Caco-2 (cell line): ENCODE measurements at regions of chr20 and their contacts with region 1.

Region 1: DNA sequence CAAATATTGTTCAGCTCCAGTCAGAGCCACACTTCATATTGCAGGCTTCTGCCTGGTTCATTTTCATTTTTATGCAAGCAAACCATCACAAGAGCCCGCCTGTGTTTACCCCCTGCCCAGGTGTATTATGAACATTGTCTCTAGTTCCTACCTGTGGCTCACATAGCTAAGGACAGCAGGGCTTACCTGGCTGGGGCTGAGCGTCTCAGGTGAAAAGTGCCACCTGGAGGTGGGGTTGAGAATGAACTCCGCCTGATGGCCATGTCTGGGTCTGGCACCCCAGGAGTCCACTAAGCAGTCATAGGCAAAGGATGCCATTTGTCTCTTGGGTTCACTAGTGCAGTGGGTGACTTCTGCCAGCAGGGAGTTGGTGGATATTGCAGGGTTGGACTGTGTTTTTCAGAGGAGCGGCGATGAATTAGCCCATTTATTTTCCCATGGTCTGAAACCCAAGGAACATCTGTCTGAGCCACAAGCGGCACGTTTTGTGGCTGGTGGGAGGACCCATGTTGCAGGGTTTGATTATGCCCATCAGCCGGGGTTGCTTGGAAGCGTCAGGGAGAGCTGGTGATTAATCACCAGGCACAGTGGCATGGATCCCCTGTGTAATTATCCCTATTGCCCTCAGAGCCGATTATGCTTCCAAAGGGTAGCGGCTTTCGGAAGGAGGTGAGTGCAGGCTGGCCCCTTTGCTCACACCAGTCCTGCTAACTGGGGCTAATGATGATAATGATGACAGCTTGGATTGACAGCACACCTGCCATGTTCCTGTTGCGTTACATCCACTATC is 92.1 kb downstream of the CDH26 start:
- DNase-seq: peak; percentile 86 to 90
- H3K4me3 ChIP-seq: no peak overlapping the region
- H3K4me3 Mint-ChIP-seq: no peak overlapping the region
- H3K27ac Mint-ChIP-seq: no peak overlapping the region
- H3K4me1 ChIP-seq: peaks cover 8% of the 10 kb centered on the region
- H3K4me1 Mint-ChIP-seq: peaks cover 24% of the 10 kb centered on the region
- H3K27me3 ChIP-seq: no peaks in the 10 kb centered on the region
- H3K27me3 Mint-ChIP-seq: peaks cover 3% of the 10 kb centered on the region
- CTCF ChIP-seq: peak; percentile 94 to 98

Region 2: GRCh38 chr20:59925939-59926338 is 124.4 kb before region 1 on chr20:
- CTCF ChIA-PET with region 1: no interaction called
- POLR2A ChIA-PET with region 1: no interaction called
- intact Hi-C with region 1: no loop called
- DNase-seq: no peak
- H3K4me3 ChIP-seq: no peak overlapping the region
- H3K4me3 Mint-ChIP-seq: no peak overlapping the region
- H3K27ac Mint-ChIP-seq: no peak overlapping the region
- H3K4me1 ChIP-seq: peaks cover 20% of the 10 kb centered on the region
- H3K4me1 Mint-ChIP-seq: peaks cover 14% of the 10 kb centered on the region
- H3K27me3 ChIP-seq: no peaks in the 10 kb centered on the region
- H3K27me3 Mint-ChIP-seq: no peaks in the 10 kb centered on the region
- CTCF ChIP-seq: no peak

Region 3: GRCh38 chr20:59948828-59949720 is 101.3 kb before region 1 on chr20:
- CTCF ChIA-PET with region 1: interaction called, 7 read pairs
- POLR2A ChIA-PET with region 1: no interaction called
- intact Hi-C with region 1: loop called (anchors 1 kb)
- DNase-seq: peak; percentile 59 to 73
- H3K4me3 ChIP-seq: no peak overlapping the region
- H3K4me3 Mint-ChIP-seq: no peak overlapping the region
- H3K27ac Mint-ChIP-seq: no peak overlapping the region
- H3K4me1 ChIP-seq: no peaks in the 10 kb centered on the region
- H3K4me1 Mint-ChIP-seq: peaks cover 7% of the 10 kb centered on the region
- H3K27me3 ChIP-seq: no peaks in the 10 kb centered on the region
- H3K27me3 Mint-ChIP-seq: no peaks in the 10 kb centered on the region
- CTCF ChIP-seq: peak; percentile 86 to 91

Region 4: DNA sequence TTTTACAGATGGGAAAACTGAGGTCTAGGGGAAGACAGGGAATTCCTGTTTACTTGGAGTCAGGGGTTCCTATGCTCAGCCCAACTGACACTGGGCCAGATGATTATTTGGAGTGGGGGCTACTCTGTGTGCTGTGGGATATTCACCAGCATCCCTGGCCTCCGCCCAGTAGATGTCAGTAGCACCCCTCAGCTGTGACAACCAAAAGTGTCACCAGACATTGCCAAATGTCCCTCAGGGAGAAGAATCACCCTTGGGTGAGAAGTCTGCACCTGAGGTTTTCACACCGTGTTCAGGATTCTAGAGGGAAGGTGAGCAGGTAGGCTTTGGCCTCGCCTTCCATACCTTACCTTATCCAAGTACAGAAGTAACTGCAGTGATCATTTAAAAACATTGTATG is 64.5 kb before region 1 on chr20:
- CTCF ChIA-PET with region 1: interaction called, 27 read pairs
- POLR2A ChIA-PET with region 1: interaction called, 4 read pairs
- intact Hi-C with region 1: loop called (anchors 1 kb)
- DNase-seq: peak; percentile 76 to 83
- H3K4me3 ChIP-seq: no peak overlapping the region
- H3K4me3 Mint-ChIP-seq: no peak overlapping the region
- H3K27ac Mint-ChIP-seq: no peak overlapping the region
- H3K4me1 ChIP-seq: no peaks in the 10 kb centered on the region
- H3K4me1 Mint-ChIP-seq: peaks cover 6% of the 10 kb centered on the region
- H3K27me3 ChIP-seq: no peaks in the 10 kb centered on the region
- H3K27me3 Mint-ChIP-seq: no peaks in the 10 kb centered on the region
- CTCF ChIP-seq: peak; percentile 93 to 94

Region 5: GRCh38 chr20:59992596-59992995 is 57.8 kb before region 1 on chr20:
- CTCF ChIA-PET with region 1: interaction called, 48 read pairs
- POLR2A ChIA-PET with region 1: interaction called, 4 read pairs
- intact Hi-C with region 1: loop called (anchors 1 kb)
- DNase-seq: no peak
- H3K4me3 ChIP-seq: no peak overlapping the region
- H3K4me3 Mint-ChIP-seq: no peak overlapping the region
- H3K27ac Mint-ChIP-seq: no peak overlapping the region
- H3K4me1 ChIP-seq: peaks cover 5% of the 10 kb centered on the region; the same call in 1 of the 2 replicates
- H3K4me1 Mint-ChIP-seq: no peaks in the 10 kb centered on the region
- H3K27me3 ChIP-seq: no peaks in the 10 kb centered on the region
- H3K27me3 Mint-ChIP-seq: no peaks in the 10 kb centered on the region
- CTCF ChIP-seq: peak; percentile 1 to 35

Region 6: GRCh38 chr20:60024801-60025200 is 25.6 kb before region 1 on chr20:
- CTCF ChIA-PET with region 1: interaction called, 13 read pairs
- POLR2A ChIA-PET with region 1: no interaction called
- intact Hi-C with region 1: no loop called
- DNase-seq: peak in 1 of 2 experiments; percentile 47
- H3K4me3 ChIP-seq: no peak overlapping the region
- H3K4me3 Mint-ChIP-seq: no peak overlapping the region
- H3K27ac Mint-ChIP-seq: no peak overlapping the region
- H3K4me1 ChIP-seq: peaks cover 28% of the 10 kb centered on the region
- H3K4me1 Mint-ChIP-seq: peaks cover 13% of the 10 kb centered on the region
- H3K27me3 ChIP-seq: no peaks in the 10 kb centered on the region
- H3K27me3 Mint-ChIP-seq: no peaks in the 10 kb centered on the region
- CTCF ChIP-seq: peak in 1 of 2 experiments; percentile 20